AG04449 (cell line): ENCODE measurements at regions of chr20 and their contacts with region 1.

Region 1: GRCh38 chr20:9407805-9408421 is 106.5 kb upstream of the LAMP5 start:
- DNase-seq: peak; percentile 33
- H3K4me3 ChIP-seq: no peak overlapping the region
- CTCF ChIP-seq: peak; percentile 72

Region 2: DNA sequence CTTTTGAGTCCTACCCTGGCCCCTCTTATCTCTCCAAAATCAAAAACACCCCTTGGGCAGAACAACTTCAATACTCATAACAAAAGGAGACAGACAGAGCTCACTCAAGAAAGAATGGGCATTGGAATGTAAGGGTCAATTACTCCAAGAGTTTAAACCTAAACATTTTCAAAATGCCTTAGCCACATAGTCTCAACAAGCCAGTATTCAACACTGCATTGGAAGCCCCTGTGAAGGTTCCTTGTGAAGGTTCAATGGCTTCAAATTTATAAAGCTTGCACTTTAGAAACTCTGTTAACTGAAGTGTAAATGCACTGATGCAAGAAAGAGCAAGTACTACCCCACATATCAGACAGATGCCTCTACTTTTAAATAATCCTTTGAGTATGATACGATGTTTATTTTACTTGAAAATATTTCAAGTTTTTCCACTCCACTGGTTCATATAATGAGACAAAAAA is 32.7 kb before region 1 on chr20:
- CTCF ChIA-PET with region 1: interaction called, 11 read pairs
- POLR2A ChIA-PET with region 1: no interaction called
- DNase-seq: no peak
- H3K4me3 ChIP-seq: no peak overlapping the region
- CTCF ChIP-seq: no peak

Region 3: GRCh38 chr20:9424551-9424950 is 16.6 kb after region 1 on chr20:
- CTCF ChIA-PET with region 1: interaction called, 62 read pairs
- POLR2A ChIA-PET with region 1: no interaction called
- DNase-seq: no peak
- H3K4me3 ChIP-seq: no peak overlapping the region
- CTCF ChIP-seq: no peak

Region 4: GRCh38 chr20:9602847-9603183 is 194.9 kb after region 1 on chr20:
- CTCF ChIA-PET with region 1: interaction called, 478 read pairs
- POLR2A ChIA-PET with region 1: no interaction called
- DNase-seq: no peak
- H3K4me3 ChIP-seq: no peak overlapping the region
- CTCF ChIP-seq: no peak

Region 5: GRCh38 chr20:9616833-9617489 is 209.0 kb after region 1 on chr20:
- CTCF ChIA-PET with region 1: interaction called, 478 read pairs
- POLR2A ChIA-PET with region 1: no interaction called
- DNase-seq: peak; percentile 10
- H3K4me3 ChIP-seq: no peak overlapping the region
- CTCF ChIP-seq: peak; percentile 67